ENCODE measurements at regions of chr7 and their contacts with region 1.

Region 1: DNA sequence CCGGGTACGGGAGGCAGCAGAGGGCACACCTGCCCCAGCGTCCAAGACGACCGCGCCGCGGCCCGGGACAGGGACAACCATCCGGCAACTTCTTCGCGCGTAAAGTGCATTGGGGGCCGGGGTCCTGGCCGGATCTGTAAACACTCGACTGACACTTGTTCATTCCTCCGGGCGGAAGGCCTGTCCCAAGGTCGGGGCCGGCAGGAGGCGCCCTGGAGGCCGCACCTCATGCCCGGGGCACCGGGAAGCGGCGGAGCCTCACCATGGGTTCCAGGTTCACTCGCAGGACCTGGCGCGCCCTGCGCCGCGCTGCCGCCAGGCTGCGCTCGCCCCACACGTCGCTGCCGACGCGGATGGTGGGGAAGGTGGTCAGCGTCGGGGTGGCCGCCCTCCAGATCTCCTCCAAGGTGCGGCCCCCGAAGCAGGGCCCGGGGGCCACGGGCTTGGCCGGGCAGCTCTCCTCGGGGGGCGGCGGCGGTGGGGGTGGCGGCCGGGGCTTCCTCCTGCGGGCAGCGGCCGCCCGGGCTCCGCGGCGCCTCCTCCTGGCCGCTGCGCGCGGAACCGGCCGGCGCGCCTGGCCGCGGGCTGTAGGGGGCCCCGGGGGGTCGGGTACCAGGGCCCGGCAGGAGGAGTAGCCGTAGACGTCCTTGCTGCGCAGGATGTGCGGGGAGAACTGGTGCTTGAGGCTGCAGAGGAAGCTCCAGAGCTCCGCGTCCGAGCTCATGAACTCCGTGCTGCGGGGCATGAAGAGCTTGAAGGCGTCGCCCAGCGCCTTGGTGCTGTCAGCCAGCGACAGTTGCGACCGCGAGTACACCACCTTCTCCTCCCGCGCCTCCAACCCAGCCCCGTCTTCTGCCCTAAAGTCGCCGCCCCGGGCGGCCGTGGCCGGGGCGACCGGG is 746 bp downstream of the CCDC71L start:
- DNase-seq: peak; percentile 30 to 90
- H3K4me3 ChIP-seq: peak overlapping the region; percentile 93 to 99
- H3K27ac ChIP-seq: peak overlapping the region; percentile 96 to 99
- H3K4me1 ChIP-seq: peaks cover 4 to 13% of the 10 kb centered on the region in 2 donors
- H3K27me3 ChIP-seq: no peaks in the 10 kb centered on the region
- CTCF ChIP-seq: peak; percentile 50 to 77 (median 73)

Region 2: GRCh38 chr7:105876091-105876963 is 783.9 kb before region 1 on chr7 and contains the start of gene ATXN7L1:
- intact Hi-C with region 1: loop called (anchors 5 kb)
- DNase-seq: peak; percentile 84 to 96
- H3K4me3 ChIP-seq: peak within 1 kb of the TSS; percentile 76 to 99
- H3K27ac ChIP-seq: peak within 1 kb of the TSS; percentile 58 to 76
- H3K4me1 ChIP-seq: peaks cover 3 to 4% of the 10 kb centered on the region in 2 donors
- H3K27me3 ChIP-seq: no peaks in the 10 kb centered on the region
- CTCF ChIP-seq: peak; percentile 28 to 89 (median 52)
- total RNA-seq, gene ATXN7L1: 7.5 TPM

Region 3: DNA sequence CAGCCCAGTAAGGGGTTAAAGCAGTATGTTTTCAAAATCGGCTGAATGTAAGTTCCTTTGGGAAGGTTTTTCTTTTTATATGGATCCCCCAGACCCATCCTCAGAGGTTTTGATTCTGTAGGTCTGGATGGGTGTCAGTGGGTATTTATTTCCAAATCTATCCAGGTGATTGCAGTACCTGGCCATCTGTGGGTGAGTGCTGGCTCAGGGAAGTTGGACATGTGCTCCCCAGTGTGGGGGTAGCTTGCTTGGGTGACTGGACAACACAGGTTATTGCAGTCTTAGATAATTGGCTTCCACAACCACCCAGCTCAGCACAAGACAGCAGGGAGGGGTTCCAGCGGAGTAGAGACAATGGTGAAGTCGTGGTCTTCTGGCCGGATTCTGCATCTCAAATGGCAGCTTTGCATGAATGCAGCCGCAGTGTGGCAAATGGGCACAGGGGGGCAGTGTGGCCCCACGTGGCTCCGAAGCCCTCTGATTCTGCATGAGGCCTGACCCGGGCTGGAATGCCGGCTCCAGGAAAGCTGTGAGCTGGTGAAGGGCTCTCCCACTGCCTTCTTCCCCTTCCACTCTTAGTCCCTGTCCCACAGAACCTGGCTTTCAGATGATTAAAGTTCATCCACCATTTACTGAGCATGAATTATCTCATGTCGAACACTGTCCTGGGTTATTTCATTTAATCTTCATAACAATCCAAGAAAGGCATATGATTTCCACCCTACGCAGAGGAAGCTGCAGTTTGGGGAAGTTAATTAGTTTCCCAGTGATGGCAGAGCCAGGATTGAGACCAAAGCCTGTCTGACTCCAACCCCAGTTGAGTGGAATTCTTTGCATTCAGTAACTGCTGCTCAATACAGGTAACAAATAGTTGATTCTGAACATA is 483.6 kb before region 1 on chr7:
- intact Hi-C with region 1: loop called (anchors 2 kb)
- DNase-seq: peak; percentile 41 to 92
- H3K4me3 ChIP-seq: no peak overlapping the region
- H3K27ac ChIP-seq: no peak overlapping the region
- H3K4me1 ChIP-seq: no peaks in the 10 kb centered on the region
- H3K27me3 ChIP-seq: no peaks in the 10 kb centered on the region
- CTCF ChIP-seq: peak; percentile 91 to 98 (median 93)

Region 4: GRCh38 chr7:107387128-107387527 is 726.9 kb after region 1 on chr7:
- intact Hi-C with region 1: loop called (anchors 5 kb)
- DNase-seq: peak; percentile 12 to 76
- H3K4me3 ChIP-seq: peak overlapping the region in 1 of 2 donors; percentile 42
- H3K27ac ChIP-seq: peak overlapping the region; percentile 66 to 82
- H3K4me1 ChIP-seq: peaks cover 11 to 17% of the 10 kb centered on the region in 2 donors
- H3K27me3 ChIP-seq: no peaks in the 10 kb centered on the region
- CTCF ChIP-seq: no peak

Region 5: DNA sequence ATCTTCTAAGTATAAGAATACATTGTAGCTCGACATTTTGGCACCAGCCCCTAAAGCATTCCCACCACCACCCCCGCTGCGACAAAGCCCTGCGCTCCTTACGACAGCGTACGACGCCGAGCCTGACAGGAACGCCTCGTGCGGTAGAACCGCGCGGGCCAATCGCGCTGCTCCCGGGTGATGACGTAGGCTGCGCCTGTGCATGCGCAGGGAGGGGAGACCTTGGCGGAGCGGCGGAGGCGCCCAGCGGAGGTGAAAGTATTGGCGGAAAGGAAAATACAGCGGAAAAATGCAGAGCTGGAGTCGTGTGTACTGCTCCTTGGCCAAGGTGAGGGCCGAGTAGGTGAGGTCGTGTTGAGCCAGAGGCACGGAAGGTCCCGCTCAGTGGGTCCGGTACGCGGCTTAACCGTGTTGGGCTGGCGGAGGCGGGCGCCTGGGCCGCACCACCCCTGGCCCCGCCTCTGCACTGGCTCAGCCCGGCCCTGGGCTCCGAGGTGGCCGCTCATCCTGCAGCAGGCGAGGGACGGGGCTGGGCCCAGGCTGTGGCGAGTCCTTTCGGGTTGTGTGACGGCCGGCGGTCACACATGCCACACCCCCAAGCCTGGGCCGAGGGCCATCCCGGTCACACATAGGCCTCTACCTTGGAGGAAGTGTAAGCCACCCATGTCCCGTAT is 1230.9 kb after region 1 on chr7 and contains the start of gene DLD:
- intact Hi-C with region 1: loop called (anchors 5 kb)
- DNase-seq: peak; percentile 78 to 97
- H3K4me3 ChIP-seq: peak within 1 kb of the TSS; percentile 83 to 85
- H3K27ac ChIP-seq: peak within 1 kb of the TSS; percentile 95
- H3K4me1 ChIP-seq: peaks cover 3 to 17% of the 10 kb centered on the region in 2 donors
- H3K27me3 ChIP-seq: no peaks in the 10 kb centered on the region
- CTCF ChIP-seq: no peak
- total RNA-seq, gene DLD: 19.2 TPM